GM12878 (cell line): ENCODE measurements at regions of chr3 and their contacts with region 1.

Region 1: GRCh38 chr3:192444096-192444790 is 283.1 kb downstream of the FGF12 start:
- DNase-seq: peak; percentile 4
- ATAC-seq: peak; percentile 95
- H3K4me3 ChIP-seq: no peak overlapping the region
- H3K27ac ChIP-seq: no peak overlapping the region
- H3K4me1 ChIP-seq: no peaks in the 10 kb centered on the region
- H3K27me3 ChIP-seq: no peaks in the 10 kb centered on the region
- CTCF ChIP-seq: peak; percentile 96 to 99 (median 98); a peak in 5 of 6 replicates
- EP300 ChIP-seq: no peak
- POLR2A ChIP-seq: no peak
- RAD21 ChIP-seq: peak; percentile 99

Region 2: GRCh38 chr3:191412759-191413158 is 1031.5 kb before region 1 on chr3:
- CTCF ChIA-PET with region 1: interaction called, 6 read pairs
- POLR2A ChIA-PET with region 1: no interaction called
- RAD21 ChIA-PET with region 1: interaction called, 3 read pairs
- SMC1A ChIA-PET with region 1: interaction called, 3 read pairs
- in situ Hi-C with region 1: loop called (anchors 5 kb)
- intact Hi-C with region 1: loop called (anchors 1 kb)
- DNase-seq: no peak
- ATAC-seq: no peak; the same call in 2 of the 3 replicates
- H3K4me3 ChIP-seq: no peak overlapping the region
- H3K27ac ChIP-seq: no peak overlapping the region
- H3K4me1 ChIP-seq: no peaks in the 10 kb centered on the region
- H3K27me3 ChIP-seq: no peaks in the 10 kb centered on the region
- CTCF ChIP-seq: no peak
- EP300 ChIP-seq: no peak
- POLR2A ChIP-seq: no peak
- RAD21 ChIP-seq: no peak

Region 3: DNA sequence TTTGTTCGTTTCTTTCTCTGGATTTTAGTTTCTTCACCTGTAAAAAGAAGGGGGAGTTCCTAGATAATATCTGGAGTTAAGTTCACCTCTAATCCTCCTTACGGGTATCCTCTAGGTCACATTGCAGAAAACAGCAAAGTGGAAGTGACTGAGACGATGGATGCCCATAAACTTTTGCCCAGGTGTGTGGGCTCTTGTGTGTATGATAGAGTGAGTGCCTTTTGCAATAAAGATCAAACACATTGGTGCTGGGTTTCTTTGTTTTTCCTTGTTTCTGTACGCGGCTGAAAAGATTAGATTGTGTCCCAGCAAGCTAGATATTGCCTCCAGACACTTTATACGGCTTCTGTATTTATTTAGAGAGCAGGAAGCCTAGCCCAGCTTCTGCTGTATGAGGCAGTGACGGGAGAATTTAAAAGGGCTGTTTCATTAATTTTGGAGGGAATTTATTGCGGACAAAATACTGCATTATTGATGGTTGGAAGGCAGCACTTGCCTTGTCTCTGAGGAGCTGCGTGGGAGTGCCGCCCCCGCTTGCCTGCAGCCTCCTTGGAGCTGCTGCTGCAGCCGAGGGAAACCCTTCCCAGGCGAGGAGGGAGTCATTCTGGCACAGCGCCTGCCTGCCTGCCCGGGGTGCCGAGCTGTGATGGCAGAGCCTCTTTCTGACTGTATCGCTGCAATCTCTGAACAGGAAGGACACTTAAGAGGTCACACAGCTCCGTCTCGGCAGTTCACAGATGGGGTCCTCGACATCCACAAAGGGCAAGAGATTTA is 944.7 kb before region 1 on chr3:
- CTCF ChIA-PET with region 1: no interaction called
- POLR2A ChIA-PET with region 1: no interaction called
- RAD21 ChIA-PET with region 1: no interaction called
- SMC1A ChIA-PET with region 1: no interaction called
- in situ Hi-C with region 1: no loop called
- intact Hi-C with region 1: loop called (anchors 10 kb)
- DNase-seq: no peak
- ATAC-seq: no peak
- H3K4me3 ChIP-seq: no peak overlapping the region
- H3K27ac ChIP-seq: no peak overlapping the region
- H3K4me1 ChIP-seq: no peaks in the 10 kb centered on the region
- H3K27me3 ChIP-seq: peaks cover 0 to 3% of the 10 kb centered on the region in 2 experiments; a peak in 2 of 4 replicates
- CTCF ChIP-seq: no peak
- EP300 ChIP-seq: no peak
- POLR2A ChIP-seq: no peak
- RAD21 ChIP-seq: no peak

Region 4: DNA sequence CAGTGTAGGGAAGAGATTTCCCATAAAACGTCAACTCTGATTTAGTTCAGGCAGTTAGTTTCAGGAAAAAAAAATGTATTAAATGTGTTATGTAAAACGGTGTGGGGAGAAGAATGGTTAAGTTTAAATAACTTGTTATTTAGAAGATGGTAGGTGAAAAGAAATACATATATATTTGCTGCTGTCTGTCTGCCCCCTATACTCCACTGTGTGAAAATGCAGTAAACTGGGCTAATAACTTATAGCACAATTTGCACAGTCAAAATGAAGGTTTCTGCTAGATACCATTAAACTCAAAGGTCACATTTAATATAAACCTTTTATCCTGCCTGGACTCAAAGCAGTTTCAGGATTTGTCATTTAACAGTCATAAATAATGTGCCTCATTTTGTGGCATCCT is 231.9 kb before region 1 on chr3:
- CTCF ChIA-PET with region 1: interaction called, 12 read pairs
- POLR2A ChIA-PET with region 1: no interaction called
- RAD21 ChIA-PET with region 1: no interaction called
- SMC1A ChIA-PET with region 1: no interaction called
- in situ Hi-C with region 1: no loop called
- intact Hi-C with region 1: no loop called
- DNase-seq: no peak
- ATAC-seq: peak; percentile 47; the same call in 1 of the 3 replicates
- H3K4me3 ChIP-seq: no peak overlapping the region
- H3K27ac ChIP-seq: no peak overlapping the region
- H3K4me1 ChIP-seq: no peaks in the 10 kb centered on the region
- H3K27me3 ChIP-seq: no peaks in the 10 kb centered on the region
- CTCF ChIP-seq: peak; percentile 17 to 42 (median 40); a peak in 5 of 6 replicates
- EP300 ChIP-seq: no peak
- POLR2A ChIP-seq: no peak
- RAD21 ChIP-seq: peak; percentile 32; the same call in 1 of the 2 replicates

Region 5: DNA sequence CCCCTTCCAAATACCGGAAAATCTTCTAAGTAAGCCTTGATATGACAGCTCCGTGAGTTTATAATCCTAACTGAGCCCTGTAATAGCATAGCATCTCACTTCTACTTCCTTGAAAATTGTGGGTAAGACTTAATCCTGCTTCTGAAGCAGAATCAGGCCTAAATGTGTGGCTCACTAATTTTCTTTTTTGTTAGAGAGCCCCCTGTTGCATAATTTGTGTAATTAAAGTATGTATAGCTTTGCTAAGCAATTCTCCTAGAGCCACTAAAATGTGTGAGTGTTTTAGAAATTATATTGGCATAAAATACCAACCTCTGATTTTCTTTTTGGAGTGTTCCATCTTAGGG is 21.3 kb before region 1 on chr3:
- CTCF ChIA-PET with region 1: interaction called, 34 read pairs
- POLR2A ChIA-PET with region 1: no interaction called
- RAD21 ChIA-PET with region 1: interaction called, 17 read pairs
- SMC1A ChIA-PET with region 1: interaction called, 19 read pairs
- in situ Hi-C with region 1: no loop called
- intact Hi-C with region 1: no loop called
- DNase-seq: no peak
- ATAC-seq: peak; percentile 52; the same call in 2 of the 3 replicates
- H3K4me3 ChIP-seq: no peak overlapping the region
- H3K27ac ChIP-seq: no peak overlapping the region
- H3K4me1 ChIP-seq: no peaks in the 10 kb centered on the region
- H3K27me3 ChIP-seq: no peaks in the 10 kb centered on the region
- CTCF ChIP-seq: peak; percentile 16 to 44 (median 19); a peak in 2 of 6 replicates
- EP300 ChIP-seq: no peak
- POLR2A ChIP-seq: no peak
- RAD21 ChIP-seq: peak; percentile 37; the same call in 1 of the 2 replicates

Region 6: DNA sequence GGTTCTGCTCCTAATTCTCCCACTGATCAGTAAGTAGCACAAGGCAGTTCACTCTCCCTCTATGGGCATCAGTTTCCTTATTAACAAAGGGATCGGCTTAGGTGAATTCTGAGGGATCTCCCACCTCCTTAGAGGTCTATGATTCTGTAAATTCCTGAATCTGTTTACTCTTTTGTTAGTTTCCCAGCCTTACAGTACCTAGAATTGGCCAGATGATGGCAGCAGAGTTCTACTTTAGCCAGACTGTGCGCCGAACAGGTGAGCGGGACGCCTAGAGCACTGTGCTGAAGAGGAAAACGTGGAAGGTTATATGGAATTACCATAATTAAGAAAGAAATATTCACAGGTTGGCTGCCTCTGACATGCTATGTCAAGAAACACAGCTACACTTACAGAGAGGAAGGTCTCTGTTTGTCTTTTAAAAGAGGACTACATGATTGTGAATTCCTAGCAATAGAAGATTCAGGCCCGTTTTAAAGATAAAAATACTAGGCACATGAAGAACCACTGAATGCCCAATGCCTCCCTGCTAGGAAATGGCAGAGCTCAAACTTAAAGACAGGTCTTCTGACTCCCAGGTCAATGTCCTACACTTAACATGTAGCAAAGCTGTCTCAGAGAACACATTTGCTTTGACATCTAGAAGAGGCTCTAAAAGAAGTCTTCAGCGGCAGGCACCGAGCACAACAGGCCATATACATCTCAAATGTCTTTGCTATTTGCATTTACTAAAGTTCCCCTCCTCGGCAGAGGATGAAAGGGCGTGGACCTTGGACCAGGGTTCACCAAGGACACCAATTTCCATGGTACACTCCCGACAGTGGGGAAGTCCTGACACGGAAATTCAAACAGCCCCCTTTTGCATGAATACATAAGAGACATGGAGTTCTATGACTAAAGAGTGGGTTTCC is 23.2 kb after region 1 on chr3:
- CTCF ChIA-PET with region 1: interaction called, 12 read pairs
- POLR2A ChIA-PET with region 1: no interaction called
- RAD21 ChIA-PET with region 1: interaction called, 3 read pairs
- SMC1A ChIA-PET with region 1: no interaction called
- in situ Hi-C with region 1: no loop called
- intact Hi-C with region 1: no loop called
- DNase-seq: peak; percentile 8
- ATAC-seq: peak; percentile 92
- H3K4me3 ChIP-seq: no peak overlapping the region
- H3K27ac ChIP-seq: no peak overlapping the region
- H3K4me1 ChIP-seq: no peaks in the 10 kb centered on the region
- H3K27me3 ChIP-seq: no peaks in the 10 kb centered on the region; a peak in 1 of 4 replicates
- CTCF ChIP-seq: peak; percentile 78 to 85 (median 85)
- EP300 ChIP-seq: no peak
- POLR2A ChIP-seq: no peak
- RAD21 ChIP-seq: peak; percentile 88